ENCODE measurements at regions of chr3 and their contacts with region 1.

Region 1: DNA sequence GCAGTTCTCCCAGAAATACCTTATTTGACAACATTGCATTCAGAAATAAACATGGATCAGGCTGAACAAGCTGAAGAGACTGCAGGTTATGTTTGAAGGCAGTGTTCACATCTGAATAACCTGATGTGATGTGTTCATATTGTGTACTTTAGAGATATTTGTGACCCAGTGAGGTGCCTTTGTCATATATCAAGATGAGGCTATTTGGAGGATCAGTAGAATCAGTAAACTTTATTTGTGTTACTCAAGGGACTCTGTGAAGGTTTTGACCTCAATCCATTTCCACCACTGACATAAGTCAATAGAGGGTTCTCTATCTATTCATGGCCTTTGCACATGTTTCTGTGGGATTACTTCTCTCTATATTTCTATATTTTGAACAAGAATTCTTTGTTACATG is 1019.2 kb downstream of the DIPK2A start:
- DNase-seq: no peak
- H3K4me3 ChIP-seq: no peak overlapping the region
- H3K27ac ChIP-seq: no peak overlapping the region
- H3K4me1 ChIP-seq: no peaks in the 10 kb centered on the region
- H3K27me3 ChIP-seq: no peaks in the 10 kb centered on the region
- CTCF ChIP-seq: no peak

Region 2: DNA sequence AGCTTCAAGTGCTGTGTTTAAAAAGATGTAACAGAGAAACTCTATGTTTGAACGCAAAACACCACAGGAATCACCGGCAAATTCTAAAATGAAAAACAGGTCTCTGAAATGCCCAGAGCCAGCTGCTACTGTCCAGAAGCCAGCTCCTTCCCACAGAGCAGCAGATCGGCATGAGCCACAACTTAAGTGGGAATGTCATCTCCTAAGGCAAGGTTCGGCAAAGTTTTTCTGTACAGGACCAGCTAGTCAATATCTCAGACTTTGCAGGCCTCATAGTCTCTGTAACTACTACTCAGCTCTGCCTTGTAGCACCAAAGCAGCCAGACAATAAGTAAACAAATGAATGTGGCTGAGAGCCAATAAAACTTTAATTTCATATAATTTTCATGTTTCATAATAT is 1165.3 kb after region 1 on chr3:
- CTCF ChIA-PET with region 1: interaction called, 14 read pairs
- POLR2A ChIA-PET with region 1: no interaction called
- intact Hi-C with region 1: no loop called
- DNase-seq: no peak
- H3K4me3 ChIP-seq: no peak overlapping the region
- H3K27ac ChIP-seq: no peak overlapping the region
- H3K4me1 ChIP-seq: peaks cover 14% of the 10 kb centered on the region
- H3K27me3 ChIP-seq: no peaks in the 10 kb centered on the region
- CTCF ChIP-seq: no peak